ENCODE measurements at regions of chr10 and their contacts with region 1.

Region 1: DNA sequence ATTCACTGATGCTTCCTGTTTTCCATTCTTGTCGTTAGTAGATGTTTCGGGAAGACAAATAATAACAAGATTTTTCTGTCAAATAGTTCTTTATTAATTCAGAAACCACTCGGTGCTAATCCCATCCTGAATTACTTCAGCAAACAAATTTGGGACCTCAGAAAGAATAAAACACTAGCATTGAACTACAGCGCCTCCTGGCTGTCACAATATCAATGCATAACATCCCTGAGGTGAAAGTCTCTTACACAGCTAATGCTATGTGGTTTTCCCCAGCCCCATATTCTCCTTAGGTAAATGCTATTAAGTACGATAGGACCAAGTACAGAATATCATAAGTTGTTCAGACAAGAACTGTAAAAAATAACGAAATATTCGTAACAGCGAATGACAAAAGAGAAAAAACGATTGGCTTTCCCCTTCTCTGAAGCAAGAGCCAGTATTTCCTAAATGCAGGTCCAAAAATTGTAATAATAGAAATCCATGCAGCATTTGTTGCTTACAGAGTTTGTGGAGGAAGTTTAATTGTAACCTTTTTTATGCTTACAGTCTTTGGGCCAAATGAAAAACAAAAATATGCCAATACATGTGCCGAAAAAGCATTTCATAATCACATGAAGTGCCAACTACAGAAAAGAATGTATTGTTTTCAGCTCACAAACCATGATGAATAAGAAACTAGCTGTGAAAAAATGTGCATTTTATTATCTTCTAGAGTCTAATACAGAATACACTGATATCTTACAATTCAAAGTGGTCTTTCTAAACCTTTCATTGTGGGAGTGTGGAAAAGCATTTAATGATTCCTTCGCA is 47.3 kb downstream of the MYPN start:
- DNase-seq: peak; percentile 58
- ATAC-seq: peak; percentile 39; the same call in 1 of the 2 replicates
- H3K4me3 ChIP-seq: no peak overlapping the region
- H3K27ac ChIP-seq: no peak overlapping the region
- H3K4me1 ChIP-seq: peaks cover 15 to 51% of the 10 kb centered on the region in 2 experiments
- H3K27me3 ChIP-seq: no peaks in the 10 kb centered on the region
- CTCF ChIP-seq: peak; percentile 80 to 94 (median 85)
- POLR2A ChIP-seq: no peak
- RAD21 ChIP-seq: peak; percentile 92

Region 2: DNA sequence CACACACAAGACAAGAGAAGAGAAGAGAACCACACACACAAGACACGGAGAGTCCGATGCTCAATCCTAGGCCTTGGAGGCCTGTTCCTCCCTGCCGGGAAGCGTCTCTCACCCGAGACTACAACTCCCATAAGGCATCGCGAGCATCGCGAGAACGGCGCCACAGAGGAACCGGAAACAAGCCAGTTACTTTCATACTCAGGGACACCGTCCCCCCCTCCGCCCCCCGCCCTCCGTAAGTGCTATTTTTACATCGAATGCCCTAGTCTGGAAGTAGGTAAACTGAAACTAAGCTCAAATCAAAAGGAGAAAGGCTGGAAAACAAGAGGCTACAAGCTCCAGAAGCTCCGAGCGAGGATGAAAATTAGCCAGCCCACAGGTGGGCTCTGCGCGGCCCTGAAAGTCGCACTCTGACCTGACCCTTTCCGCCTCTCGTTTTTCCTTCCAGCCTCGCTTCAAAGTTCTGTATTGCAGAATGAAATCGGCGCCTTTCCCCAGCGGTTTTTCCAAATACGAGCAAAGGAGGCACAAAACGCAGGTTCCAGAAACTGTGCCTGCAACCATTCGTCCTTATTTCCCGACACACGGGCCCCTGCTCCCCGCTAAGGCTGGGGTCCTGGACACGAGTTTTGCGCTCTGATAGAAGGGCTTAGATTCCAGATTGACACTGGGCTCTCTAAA is 307.1 kb before region 1 on chr10:
- CTCF ChIA-PET with region 1: interaction called, 21 read pairs
- POLR2A ChIA-PET with region 1: no interaction called
- RAD21 ChIA-PET with region 1: no interaction called
- intact Hi-C with region 1: no loop called
- DNase-seq: peak; percentile 87
- ATAC-seq: peak; percentile 99
- H3K4me3 ChIP-seq: peak overlapping the region; percentile 88
- H3K27ac ChIP-seq: peak overlapping the region; percentile 64
- H3K4me1 ChIP-seq: 0 out of 4 replicates have a peak, but pooled peaks cover 0 to 2% of the 10 kb centered on the region in 2 experiments
- H3K27me3 ChIP-seq: no peaks in the 10 kb centered on the region
- CTCF ChIP-seq: no peak
- POLR2A ChIP-seq: peak; percentile 56
- RAD21 ChIP-seq: no peak

Region 3: DNA sequence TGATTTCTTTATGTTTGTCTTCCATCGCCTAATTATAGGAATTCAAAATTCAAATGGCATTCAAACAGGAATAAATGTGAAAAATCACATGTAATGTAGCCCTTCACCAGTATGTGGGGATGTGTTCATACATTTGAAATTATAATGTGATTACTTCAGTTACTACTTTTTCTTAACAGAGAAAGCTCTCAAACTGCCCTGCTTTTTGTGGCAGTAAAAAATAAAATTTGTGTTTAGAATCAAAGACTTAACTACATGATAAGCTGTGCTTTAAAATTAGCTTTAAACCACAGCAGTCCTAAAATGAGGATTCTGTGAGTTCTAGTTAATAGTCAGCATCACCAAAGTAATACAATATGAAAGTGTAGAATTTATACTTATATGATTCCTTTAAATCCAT is 73.7 kb before region 1 on chr10:
- CTCF ChIA-PET with region 1: interaction called, 41 read pairs
- POLR2A ChIA-PET with region 1: interaction called, 5 read pairs
- RAD21 ChIA-PET with region 1: interaction called, 3 read pairs
- intact Hi-C with region 1: loop called (anchors 1 kb)
- DNase-seq: no peak
- ATAC-seq: peak; percentile 52; the same call in 1 of the 2 replicates
- H3K4me3 ChIP-seq: no peak overlapping the region
- H3K27ac ChIP-seq: no peak overlapping the region
- H3K4me1 ChIP-seq: peaks cover 11 to 30% of the 10 kb centered on the region in 2 experiments
- H3K27me3 ChIP-seq: no peaks in the 10 kb centered on the region
- CTCF ChIP-seq: peak; percentile 32 to 84 (median 69); a peak in 5 of 6 replicates
- POLR2A ChIP-seq: no peak
- RAD21 ChIP-seq: peak; percentile 87

Region 4: GRCh38 chr10:68096913-68097503 is 59.6 kb before region 1 on chr10:
- CTCF ChIA-PET with region 1: interaction called, 6 read pairs
- POLR2A ChIA-PET with region 1: interaction called, 3 read pairs
- RAD21 ChIA-PET with region 1: interaction called in 1 of 2 experiments, 4 read pairs
- intact Hi-C with region 1: loop called (anchors 5 kb)
- DNase-seq: peak; percentile 80
- ATAC-seq: peak; percentile 74
- H3K4me3 ChIP-seq: no peak overlapping the region; a peak in 1 of 4 replicates
- H3K27ac ChIP-seq: peak overlapping the region; percentile 69; the same call in 1 of the 2 replicates
- H3K4me1 ChIP-seq: peaks cover 55 to 91% of the 10 kb centered on the region in 2 experiments
- H3K27me3 ChIP-seq: no peaks in the 10 kb centered on the region
- CTCF ChIP-seq: no peak
- POLR2A ChIP-seq: no peak
- RAD21 ChIP-seq: no peak